ENCODE measurements at regions of chr15 and their contacts with region 1.

Region 1: GRCh38 chr15:93997084-93997918 is 234.1 kb upstream of the MCTP2 start:
- ATAC-seq: no peak
- H3K4me3 ChIP-seq: no peak overlapping the region
- H3K27ac ChIP-seq: no peak overlapping the region
- H3K4me1 ChIP-seq: peaks cover 7 to 27% of the 10 kb centered on the region in 2 donors

Region 2: GRCh38 chr15:93072411-93073394 is 924.6 kb before region 1 on chr15:
- in situ Hi-C with region 1: loop called in 3 of 9 experiments (anchors 25 kb)
- ATAC-seq: peak; percentile 79 to 88 (median 82)
- H3K4me3 ChIP-seq: peak overlapping the region; percentile 46 to 87 (median 63)
- H3K27ac ChIP-seq: peak overlapping the region; percentile 82 to 88
- H3K4me1 ChIP-seq: peaks cover 73 to 77% of the 10 kb centered on the region in 2 donors